ENCODE measurements at regions of chr7 and their contacts with region 1.

Region 1: DNA sequence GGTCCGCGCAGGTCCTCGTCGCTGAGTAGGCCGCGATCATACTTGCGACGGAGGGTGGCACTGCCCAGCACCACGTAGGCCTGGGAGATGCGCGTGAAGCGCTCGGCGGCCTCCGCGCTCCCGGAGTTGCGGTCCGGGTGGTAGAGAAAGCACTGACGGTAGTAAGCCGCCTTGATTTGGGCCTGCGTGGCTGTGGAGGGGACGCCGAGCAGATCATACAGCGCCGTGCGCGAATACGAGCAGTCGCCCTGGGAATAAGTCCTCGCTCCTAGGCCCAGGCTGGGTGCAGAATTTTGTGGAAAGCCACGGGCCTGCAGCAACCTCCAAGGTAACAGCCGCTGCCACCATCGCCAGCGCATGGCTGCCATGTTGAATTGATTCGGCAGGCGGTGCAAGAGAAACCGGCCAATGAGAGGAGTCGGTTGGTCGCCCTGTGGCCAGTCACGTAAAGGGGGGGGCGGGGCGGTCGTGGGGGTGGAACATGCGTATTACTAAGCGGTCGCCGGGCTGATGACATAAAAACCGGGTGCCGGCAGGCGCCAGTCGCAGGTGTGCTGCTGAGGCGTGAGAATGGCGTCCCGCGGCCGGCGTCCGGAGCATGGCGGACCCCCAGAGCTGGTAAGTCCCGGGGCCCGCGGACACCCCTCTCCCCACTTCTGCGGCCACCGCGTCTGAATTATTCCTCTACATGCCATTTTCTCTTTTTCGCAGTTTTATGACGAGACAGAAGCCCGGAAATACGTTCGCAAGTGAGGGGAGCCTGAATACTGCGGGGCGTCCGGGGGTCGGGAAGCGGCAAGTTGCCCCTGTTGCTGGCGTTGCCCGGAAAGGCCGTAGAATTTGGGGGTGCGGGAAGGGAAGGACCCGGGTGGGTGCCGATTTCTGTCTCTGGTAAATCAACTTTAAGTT is at the starts of genes BUD23 and DNAJC30:
- DNase-seq: peak; percentile 98 to 99
- ATAC-seq: peak; percentile 97
- H3K4me3 ChIP-seq: peak within 1 kb of the TSS; percentile 75 to 83
- H3K27ac ChIP-seq: peak within 1 kb of the TSS in 1 of 2 donors; percentile 70
- H3K4me1 ChIP-seq: peaks cover 2 to 3% of the 10 kb centered on the region in 2 donors
- H3K27me3 ChIP-seq: no peaks in the 10 kb centered on the region
- total RNA-seq, gene BUD23: 39.0 to 39.6 TPM
- total RNA-seq, gene DNAJC30: 6.7 to 7.8 TPM

Region 2: DNA sequence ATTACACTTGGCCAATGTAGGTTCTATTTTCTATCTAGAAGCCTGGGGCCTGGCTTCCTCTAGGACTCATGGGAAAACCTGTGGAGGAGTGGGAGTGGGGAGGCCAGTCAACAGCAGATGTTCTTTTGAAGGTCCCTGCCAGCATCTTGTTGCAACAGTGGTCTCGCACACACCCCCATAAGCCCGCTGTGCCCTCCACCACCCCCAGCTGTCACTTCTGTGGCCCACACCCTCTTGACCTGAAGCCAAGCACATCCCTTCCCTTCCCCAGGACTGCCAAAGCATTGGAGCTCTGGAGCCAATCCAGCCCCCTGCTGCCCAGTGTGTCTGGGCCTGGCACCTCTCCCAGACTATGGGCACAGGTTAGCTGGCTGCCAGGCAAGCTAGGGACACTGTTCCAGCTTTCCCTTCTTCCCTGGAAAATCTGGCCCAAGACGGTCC is 38.1 kb after region 1 on chr7:
- intact Hi-C with region 1: loop called in 1 of 2 experiments (anchors 2 kb)
- DNase-seq: peak; percentile 79 to 85
- ATAC-seq: peak; percentile 48
- H3K4me3 ChIP-seq: no peak overlapping the region
- H3K27ac ChIP-seq: no peak overlapping the region
- H3K4me1 ChIP-seq: no peaks in the 10 kb centered on the region
- H3K27me3 ChIP-seq: no peaks in the 10 kb centered on the region

Measured in aorta (tissue), 5 donors.